MCF 10A (cell line): ENCODE measurements at regions of chr15 and their contacts with region 1.

Region 1: DNA sequence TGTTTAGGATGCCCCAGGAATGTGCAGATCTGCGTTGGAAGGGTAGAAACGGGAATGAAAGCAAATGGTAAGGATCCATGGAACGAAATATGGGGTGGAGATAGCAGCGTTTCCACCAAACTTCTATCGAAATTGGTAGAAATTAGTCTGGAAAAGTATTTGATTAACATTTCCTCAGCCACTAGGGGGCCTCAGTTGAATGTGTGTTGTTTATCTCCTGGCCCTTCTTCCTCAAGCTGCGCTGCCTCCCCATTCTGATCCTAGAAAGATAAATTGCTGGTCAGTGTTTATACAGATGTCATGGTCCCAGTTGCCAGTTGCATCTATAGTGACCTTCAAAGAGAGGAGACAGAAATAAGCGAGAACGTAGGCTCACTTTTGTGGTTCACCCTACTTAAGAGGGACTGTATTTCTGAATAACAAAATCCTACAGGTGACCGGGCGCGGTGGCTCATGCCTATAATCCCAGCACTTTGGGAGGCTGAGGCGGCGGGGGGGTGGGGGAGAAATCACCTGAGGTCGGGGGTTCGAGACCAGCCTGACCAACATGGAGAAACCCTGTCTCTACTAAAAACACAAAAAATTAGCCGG is 457.1 kb downstream of the SQOR start:
- DNase-seq: peak; percentile 16
- H3K4me3 Mint-ChIP-seq: no peak overlapping the region
- H3K27ac Mint-ChIP-seq: no peak overlapping the region
- H3K4me1 Mint-ChIP-seq: no peaks in the 10 kb centered on the region
- H3K27me3 Mint-ChIP-seq: no peaks in the 10 kb centered on the region
- CTCF ChIP-seq: peak; percentile 67

Region 2: GRCh38 chr15:45714590-45715488 is 377.1 kb before region 1 on chr15:
- CTCF ChIA-PET with region 1: no interaction called
- POLR2A ChIA-PET with region 1: no interaction called
- intact Hi-C with region 1: loop called (anchors 5 kb)
- DNase-seq: peak; percentile 75
- H3K4me3 Mint-ChIP-seq: no peak overlapping the region
- H3K27ac Mint-ChIP-seq: no peak overlapping the region
- H3K4me1 Mint-ChIP-seq: peaks cover 8% of the 10 kb centered on the region
- H3K27me3 Mint-ChIP-seq: peaks cover 24% of the 10 kb centered on the region
- CTCF ChIP-seq: peak; percentile 95

Region 3: DNA sequence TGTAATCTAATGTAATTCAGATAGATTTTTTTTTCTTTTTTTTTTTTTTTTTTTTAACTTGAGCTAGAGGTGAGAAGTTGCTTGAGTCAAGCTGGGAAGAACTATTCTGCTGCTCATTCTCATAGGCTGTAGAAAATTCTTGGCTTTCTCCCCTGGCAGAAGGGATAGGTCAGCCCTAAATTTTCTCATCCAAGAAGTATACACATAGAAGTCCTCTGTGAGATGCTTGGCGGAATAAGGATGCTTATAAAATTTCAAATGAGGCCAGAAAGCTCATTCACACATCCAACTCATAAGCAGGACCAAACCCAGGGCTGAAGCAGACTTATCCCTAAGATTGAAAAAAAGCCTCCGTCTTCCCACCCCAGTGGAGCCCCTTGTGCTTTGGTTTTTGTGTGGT is 115.4 kb after region 1 on chr15:
- CTCF ChIA-PET with region 1: no interaction called
- POLR2A ChIA-PET with region 1: no interaction called
- intact Hi-C with region 1: no loop called
- DNase-seq: no peak
- H3K4me3 Mint-ChIP-seq: no peak overlapping the region
- H3K27ac Mint-ChIP-seq: no peak overlapping the region
- H3K4me1 Mint-ChIP-seq: no peaks in the 10 kb centered on the region
- H3K27me3 Mint-ChIP-seq: no peaks in the 10 kb centered on the region
- CTCF ChIP-seq: no peak

Region 4: DNA sequence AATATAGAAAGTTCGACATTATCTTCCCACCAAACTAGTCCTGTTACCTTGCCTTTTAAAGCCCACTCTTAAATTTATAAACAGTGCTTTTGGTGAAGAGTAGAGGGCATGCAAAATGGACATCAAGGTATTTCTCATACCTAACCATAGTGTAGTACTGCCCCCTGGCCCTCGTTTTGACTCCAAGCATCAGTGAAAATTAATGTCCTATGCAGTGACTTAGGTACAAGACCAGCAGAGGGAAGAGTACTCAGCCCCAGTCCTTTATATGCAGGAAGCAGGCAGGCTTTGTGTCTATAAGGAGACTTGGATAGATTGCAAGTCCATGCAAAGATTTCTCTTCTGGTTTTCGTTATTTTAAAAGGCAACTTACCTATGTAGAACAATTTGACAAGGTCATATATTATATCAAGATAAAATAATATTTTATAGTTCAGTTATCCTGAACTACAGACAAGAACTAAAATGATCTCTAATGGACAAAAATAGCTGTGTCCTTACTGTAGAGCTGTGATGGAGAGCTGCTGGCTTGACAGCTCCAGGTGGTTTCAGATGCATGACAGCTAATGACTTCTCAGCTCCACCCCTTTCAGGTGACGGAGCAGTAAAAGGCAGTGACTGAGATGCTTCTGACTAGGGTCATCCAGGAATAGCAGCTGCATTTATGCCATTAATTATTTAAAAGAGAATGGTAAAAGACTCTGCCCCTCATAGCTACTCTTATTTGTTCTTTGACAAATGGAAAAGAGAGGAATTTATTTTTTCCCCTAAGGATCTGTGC is 189.0 kb after region 1 on chr15:
- CTCF ChIA-PET with region 1: no interaction called
- POLR2A ChIA-PET with region 1: no interaction called
- intact Hi-C with region 1: loop called (anchors 1 kb)
- DNase-seq: no peak
- H3K4me3 Mint-ChIP-seq: no peak overlapping the region
- H3K27ac Mint-ChIP-seq: no peak overlapping the region
- H3K4me1 Mint-ChIP-seq: no peaks in the 10 kb centered on the region
- H3K27me3 Mint-ChIP-seq: peaks cover 11% of the 10 kb centered on the region
- CTCF ChIP-seq: peak; percentile 16

Region 5: GRCh38 chr15:46502668-46503067 is 410.7 kb after region 1 on chr15:
- CTCF ChIA-PET with region 1: no interaction called
- POLR2A ChIA-PET with region 1: no interaction called
- intact Hi-C with region 1: loop called (anchors 5 kb)
- DNase-seq: no peak
- H3K4me3 Mint-ChIP-seq: no peak overlapping the region
- H3K27ac Mint-ChIP-seq: no peak overlapping the region
- H3K4me1 Mint-ChIP-seq: peaks cover 4% of the 10 kb centered on the region
- H3K27me3 Mint-ChIP-seq: no peaks in the 10 kb centered on the region
- CTCF ChIP-seq: peak; percentile 42